CD8-positive, alpha-beta T cell (primary cell): ENCODE measurements at regions of chr16 and their contacts with region 1.

Region 1: GRCh38 chr16:9741776-9742175 is 440.5 kb downstream of the GRIN2A start:
- DNase-seq: no peak
- ATAC-seq: no peak
- H3K4me3 ChIP-seq: no peak overlapping the region
- H3K4me3 Mint-ChIP-seq: no peak overlapping the region
- H3K27ac ChIP-seq: no peak overlapping the region
- H3K27ac Mint-ChIP-seq: no peak overlapping the region
- H3K4me1 ChIP-seq: no peaks in the 10 kb centered on the region
- H3K4me1 Mint-ChIP-seq: no peaks in the 10 kb centered on the region
- H3K27me3 ChIP-seq: no peaks in the 10 kb centered on the region
- H3K27me3 Mint-ChIP-seq: no peaks in the 10 kb centered on the region
- CTCF ChIP-seq: no peak

Region 2: GRCh38 chr16:9669394-9669793 is 72.4 kb before region 1 on chr16:
- CTCF ChIA-PET with region 1: no interaction called
- POLR2A ChIA-PET with region 1: no interaction called
- intact Hi-C with region 1: loop called in 1 of 2 experiments (anchors 2 kb)
- DNase-seq: no peak
- ATAC-seq: no peak
- H3K4me3 ChIP-seq: no peak overlapping the region
- H3K4me3 Mint-ChIP-seq: no peak overlapping the region
- H3K27ac ChIP-seq: no peak overlapping the region
- H3K27ac Mint-ChIP-seq: no peak overlapping the region
- H3K4me1 ChIP-seq: no peaks in the 10 kb centered on the region
- H3K4me1 Mint-ChIP-seq: no peaks in the 10 kb centered on the region
- H3K27me3 ChIP-seq: no peaks in the 10 kb centered on the region
- H3K27me3 Mint-ChIP-seq: no peaks in the 10 kb centered on the region
- CTCF ChIP-seq: no peak